Activated CD4-positive, alpha-beta T cell treated with anti-CD3 and anti-CD28 coated beads, Interleukin-2, amount 10 ng/mL, durations not matched to agents 7 days and 5 days (primary cell): ENCODE measurements at regions of chr22 and their contacts with region 1.

Region 1: DNA sequence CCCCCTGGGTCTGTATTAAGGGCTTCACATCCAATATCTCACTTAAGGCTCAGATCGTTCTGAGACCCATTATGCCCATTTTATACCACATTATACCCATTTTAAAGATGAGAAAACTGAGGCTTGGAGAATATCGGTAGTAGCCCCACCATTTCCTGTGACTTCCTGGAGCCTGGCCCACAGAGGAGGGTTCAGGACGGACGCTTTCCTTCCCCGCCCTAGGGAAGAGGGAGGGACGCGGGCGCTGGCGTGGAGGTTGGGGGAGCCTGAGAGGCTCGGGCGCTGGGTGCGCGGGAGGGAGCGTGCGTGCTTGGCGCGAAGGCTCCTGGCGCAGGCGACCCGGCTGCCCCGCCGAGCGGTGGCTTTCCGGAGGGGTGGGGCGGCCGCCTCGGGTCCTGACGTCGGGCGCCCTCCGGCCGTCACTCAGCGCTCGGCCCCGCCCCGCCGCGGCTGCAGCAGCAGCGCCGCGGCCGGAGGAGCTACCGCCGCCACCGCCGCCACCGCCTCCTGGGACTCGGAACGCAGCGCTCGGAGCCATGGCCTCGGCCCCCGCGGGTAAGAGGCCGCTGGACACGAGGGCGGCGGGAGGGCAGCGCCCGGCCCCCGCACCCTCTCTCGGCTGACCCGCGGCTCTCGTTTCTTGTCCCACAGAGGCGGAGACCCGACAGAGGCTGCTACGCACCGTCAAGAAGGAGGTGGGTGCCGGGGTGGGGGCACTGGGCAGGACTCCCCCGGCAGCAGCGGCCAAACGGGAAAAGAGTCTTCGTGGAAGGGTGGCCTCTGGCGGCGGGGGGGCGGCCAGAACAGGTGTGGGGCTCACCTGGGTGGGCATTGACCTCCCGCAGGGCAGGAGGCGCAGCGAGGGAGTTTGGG is at the start of gene SGSM1:
- DNase-seq: peak; percentile 74
- H3K4me3 Mint-ChIP-seq: peak within 1 kb of the TSS; percentile 62
- H3K27ac Mint-ChIP-seq: peak within 1 kb of the TSS; percentile 67
- H3K4me1 Mint-ChIP-seq: peaks cover 22% of the 10 kb centered on the region
- H3K27me3 Mint-ChIP-seq: peaks cover 12% of the 10 kb centered on the region
- total RNA-seq, gene SGSM1: 0.12 to 0.15 TPM

Region 2: GRCh38 chr22:24693359-24693758 is 112.7 kb before region 1 on chr22:
- CTCF ChIA-PET with region 1: no interaction called
- POLR2A ChIA-PET with region 1: no interaction called
- DNase-seq: no peak
- H3K4me3 Mint-ChIP-seq: no peak overlapping the region
- H3K27ac Mint-ChIP-seq: no peak overlapping the region
- H3K4me1 Mint-ChIP-seq: no peaks in the 10 kb centered on the region
- H3K27me3 Mint-ChIP-seq: peaks cover 18% of the 10 kb centered on the region

Region 3: DNA sequence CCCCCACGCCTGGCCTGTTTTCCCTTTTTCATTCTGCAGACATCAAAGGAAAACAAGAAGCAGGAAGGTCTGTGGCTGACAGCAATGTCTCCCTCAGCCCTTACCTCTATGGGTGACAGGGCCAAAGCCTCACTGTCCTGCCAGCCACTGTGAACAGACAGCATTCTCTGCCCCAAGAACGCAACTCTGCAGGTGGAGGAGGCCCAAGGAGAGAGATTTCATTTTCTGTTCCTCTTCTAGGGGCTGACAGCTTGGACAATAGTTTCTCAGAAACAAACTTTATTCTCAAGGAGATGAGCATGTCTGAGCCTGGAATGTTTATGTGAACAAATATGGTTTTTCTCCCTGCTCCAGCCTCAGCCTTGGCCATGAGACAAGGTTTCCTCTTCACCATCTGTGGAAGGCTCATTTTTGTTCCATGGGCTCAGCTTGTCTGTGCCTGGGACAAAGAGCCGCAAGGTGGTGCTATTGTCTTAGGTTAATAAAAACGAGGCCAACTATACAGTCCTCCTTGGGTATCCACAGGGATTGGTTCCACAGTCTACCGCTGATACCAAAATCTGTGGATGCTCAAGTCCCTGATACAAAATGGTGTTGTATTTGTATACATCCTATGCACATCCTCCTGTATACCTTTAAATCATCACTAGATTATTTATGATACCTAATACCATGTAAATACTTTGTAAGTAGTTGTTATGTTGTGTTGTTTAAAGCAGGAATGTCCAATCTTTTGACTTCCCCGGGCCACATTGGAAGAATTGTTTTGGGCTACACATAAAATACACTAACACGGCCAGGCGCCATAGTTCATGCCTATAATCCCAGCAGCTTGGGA is 37.3 kb before region 1 on chr22:
- CTCF ChIA-PET with region 1: no interaction called
- POLR2A ChIA-PET with region 1: no interaction called
- DNase-seq: peak; percentile 61
- H3K4me3 Mint-ChIP-seq: no peak overlapping the region
- H3K27ac Mint-ChIP-seq: no peak overlapping the region
- H3K4me1 Mint-ChIP-seq: no peaks in the 10 kb centered on the region
- H3K27me3 Mint-ChIP-seq: peaks cover 6% of the 10 kb centered on the region

Region 4: GRCh38 chr22:24893341-24894070 is 87.5 kb after region 1 on chr22:
- CTCF ChIA-PET with region 1: no interaction called
- POLR2A ChIA-PET with region 1: no interaction called
- DNase-seq: no peak
- H3K4me3 Mint-ChIP-seq: no peak overlapping the region
- H3K27ac Mint-ChIP-seq: no peak overlapping the region
- H3K4me1 Mint-ChIP-seq: no peaks in the 10 kb centered on the region
- H3K27me3 Mint-ChIP-seq: no peaks in the 10 kb centered on the region

Region 5: GRCh38 chr22:25976356-25976755 is 1170.3 kb after region 1 on chr22:
- CTCF ChIA-PET with region 1: no interaction called
- POLR2A ChIA-PET with region 1: interaction called, 10 read pairs
- DNase-seq: no peak
- H3K4me3 Mint-ChIP-seq: no peak overlapping the region
- H3K27ac Mint-ChIP-seq: no peak overlapping the region
- H3K4me1 Mint-ChIP-seq: no peaks in the 10 kb centered on the region
- H3K27me3 Mint-ChIP-seq: peaks cover 5% of the 10 kb centered on the region